Calu3 (cell line): ENCODE measurements at regions of chr14 and their contacts with region 1.

Region 1: DNA sequence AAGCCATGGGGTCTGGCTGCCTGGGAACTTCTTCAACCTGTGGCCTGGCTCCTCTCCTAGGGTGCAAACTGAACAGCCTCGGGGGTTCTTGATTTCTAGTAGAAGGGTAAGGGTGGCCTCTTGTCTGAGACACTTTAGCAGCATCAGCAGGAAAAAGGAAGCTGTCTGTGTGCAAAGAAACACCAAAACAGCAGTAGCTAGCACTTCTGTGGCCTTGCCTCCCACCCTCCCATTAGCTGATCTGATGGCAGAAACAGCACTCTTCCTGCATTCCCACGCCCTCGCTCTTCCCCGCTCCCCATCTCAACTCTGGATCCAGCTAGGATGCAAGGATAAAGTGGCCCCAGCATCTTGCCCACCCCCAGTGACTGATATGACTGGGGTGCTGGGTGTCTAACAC is 20.7 kb downstream of the SLC7A8 start:
- DNase-seq: no peak
- H3K4me3 Mint-ChIP-seq: no peak overlapping the region
- H3K27ac Mint-ChIP-seq: no peak overlapping the region
- H3K4me1 Mint-ChIP-seq: no peaks in the 10 kb centered on the region
- H3K27me3 Mint-ChIP-seq: peaks cover 70% of the 10 kb centered on the region
- CTCF ChIP-seq: no peak

Region 2: GRCh38 chr14:23151342-23151741 is 11.5 kb before region 1 on chr14:
- CTCF ChIA-PET with region 1: interaction called, 10 read pairs
- intact Hi-C with region 1: no loop called
- DNase-seq: no peak
- H3K4me3 Mint-ChIP-seq: no peak overlapping the region
- H3K27ac Mint-ChIP-seq: no peak overlapping the region
- H3K4me1 Mint-ChIP-seq: no peaks in the 10 kb centered on the region
- H3K27me3 Mint-ChIP-seq: peaks cover 48% of the 10 kb centered on the region
- CTCF ChIP-seq: no peak